ENCODE measurements at regions of chr7 and their contacts with region 1.

Region 1: GRCh38 chr7:44240983-44241510 is 40.3 kb downstream of the YKT6 start:
- DNase-seq: no peak
- H3K4me3 ChIP-seq: peak overlapping the region in 2 of 4 donors; percentile 17 to 57
- H3K27ac ChIP-seq: no peak overlapping the region
- H3K4me1 ChIP-seq: peaks cover 5 to 10% (median 5%) of the 10 kb centered on the region in 3 donors
- H3K27me3 ChIP-seq: peaks cover 0 to 12% (median 0%) of the 10 kb centered on the region in 4 donors
- CTCF ChIP-seq: peak; percentile 33 to 76 (median 66)
- POLR2A ChIP-seq: no peak

Region 2: GRCh38 chr7:44477063-44477830 is 236.2 kb after region 1 on chr7:
- intact Hi-C with region 1: loop called (anchors 10 kb)
- DNase-seq: no peak
- H3K4me3 ChIP-seq: no peak overlapping the region
- H3K27ac ChIP-seq: no peak overlapping the region
- H3K4me1 ChIP-seq: peaks cover 0 to 21% (median 0%) of the 10 kb centered on the region in 3 donors
- H3K27me3 ChIP-seq: no peaks in the 10 kb centered on the region
- CTCF ChIP-seq: peak; percentile 86 to 95 (median 89)
- POLR2A ChIP-seq: no peak

Region 3: DNA sequence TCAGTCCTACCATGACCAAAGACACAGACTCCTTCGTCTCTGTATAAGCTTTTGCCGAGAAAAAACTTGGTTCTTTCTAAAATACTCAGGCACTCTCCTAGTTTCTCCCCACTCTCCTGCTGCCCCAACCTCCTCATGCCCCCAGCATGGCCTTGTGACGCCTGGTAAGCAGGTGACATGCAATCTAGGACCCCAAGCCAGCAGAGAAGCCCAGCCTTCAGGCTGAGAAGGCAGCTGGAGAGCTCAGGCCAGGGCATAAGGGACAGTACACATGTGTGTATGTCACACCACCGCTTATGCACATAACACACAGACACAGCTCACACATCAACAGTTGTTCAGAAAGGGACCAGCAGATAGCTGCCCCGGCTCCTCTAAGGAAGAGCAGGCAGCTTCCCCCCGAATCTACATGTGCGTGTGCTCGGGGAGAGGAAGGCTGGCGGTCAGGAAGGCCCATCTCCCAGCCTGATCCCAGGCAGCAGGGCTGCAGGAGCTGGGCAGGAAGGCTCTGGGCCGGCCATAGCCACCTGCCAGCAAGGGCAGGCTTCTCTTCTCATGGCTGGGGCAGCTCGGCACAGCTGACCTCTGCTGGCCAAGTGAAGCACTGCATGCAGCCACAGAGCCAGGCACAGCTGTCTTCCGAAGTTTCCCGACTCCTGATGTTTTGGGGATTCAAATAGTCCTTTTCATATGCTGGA is 324.2 kb after region 1 on chr7:
- intact Hi-C with region 1: loop called (anchors 10 kb)
- DNase-seq: no peak
- H3K4me3 ChIP-seq: no peak overlapping the region
- H3K27ac ChIP-seq: no peak overlapping the region
- H3K4me1 ChIP-seq: peaks cover 3 to 28% (median 7%) of the 10 kb centered on the region in 3 donors
- H3K27me3 ChIP-seq: no peaks in the 10 kb centered on the region
- CTCF ChIP-seq: peak; percentile 93 to 98 (median 97)
- POLR2A ChIP-seq: no peak